ENCODE measurements at regions of chr1 and their contacts with region 1.

Region 1: GRCh38 chr1:80258659-80259058 is 1252.1 kb upstream of the ADGRL4 start:
- DNase-seq: no peak
- ATAC-seq: no peak
- H3K4me3 Mint-ChIP-seq: no peak overlapping the region
- H3K27ac Mint-ChIP-seq: no peak overlapping the region
- H3K4me1 Mint-ChIP-seq: no peaks in the 10 kb centered on the region
- H3K27me3 Mint-ChIP-seq: no peaks in the 10 kb centered on the region
- CTCF ChIP-seq: no peak

Region 2: GRCh38 chr1:79224537-79224936 is 1034.1 kb before region 1 on chr1:
- CTCF ChIA-PET with region 1: no interaction called
- POLR2A ChIA-PET with region 1: interaction called, 11 read pairs
- DNase-seq: no peak
- ATAC-seq: no peak
- H3K4me3 Mint-ChIP-seq: no peak overlapping the region
- H3K27ac Mint-ChIP-seq: no peak overlapping the region
- H3K4me1 Mint-ChIP-seq: no peaks in the 10 kb centered on the region
- H3K27me3 Mint-ChIP-seq: no peaks in the 10 kb centered on the region; the same call in 1 of the 2 replicates
- CTCF ChIP-seq: no peak

Region 3: DNA sequence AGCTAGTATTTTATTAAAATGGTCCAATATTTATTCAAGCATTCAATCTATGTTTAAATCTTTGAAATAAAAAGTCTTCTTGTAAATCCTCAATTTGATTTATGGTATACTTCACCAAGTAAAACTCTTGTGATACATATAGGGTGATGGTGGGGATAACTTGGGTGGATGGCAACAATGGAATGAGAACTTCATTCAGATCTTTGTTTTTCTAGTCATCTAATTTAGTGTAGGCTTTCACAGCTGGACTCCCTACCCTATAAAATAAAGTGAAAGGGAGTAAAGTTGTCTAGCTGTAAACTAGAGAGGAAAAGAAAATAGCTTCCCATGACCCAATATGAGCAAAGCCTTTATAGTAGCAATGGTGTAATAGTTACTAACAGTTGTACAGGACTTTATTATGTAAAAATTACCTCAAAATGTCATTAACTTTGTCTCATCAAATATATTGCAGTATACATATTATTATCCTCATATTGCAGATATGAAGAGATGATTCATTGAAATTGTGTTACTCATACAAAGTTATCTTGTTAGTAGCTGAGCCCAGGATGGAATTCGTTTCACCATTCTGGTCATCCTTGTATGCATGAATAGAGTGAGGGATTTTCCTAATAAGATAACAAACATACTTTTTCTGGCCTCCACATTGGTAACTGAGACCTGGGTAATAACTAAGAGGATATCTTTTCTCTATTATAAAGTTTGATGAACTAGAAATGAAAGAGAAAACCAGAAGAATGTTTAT is 125.6 kb after region 1 on chr1:
- CTCF ChIA-PET with region 1: no interaction called
- POLR2A ChIA-PET with region 1: no interaction called
- DNase-seq: no peak
- ATAC-seq: no peak
- H3K4me3 Mint-ChIP-seq: no peak overlapping the region
- H3K27ac Mint-ChIP-seq: no peak overlapping the region
- H3K4me1 Mint-ChIP-seq: peaks cover 9% of the 10 kb centered on the region
- H3K27me3 Mint-ChIP-seq: no peaks in the 10 kb centered on the region
- CTCF ChIP-seq: no peak

Measured in WTC11 (cell line).